ENCODE measurements at regions of chr9 and their contacts with region 1.

Region 1: DNA sequence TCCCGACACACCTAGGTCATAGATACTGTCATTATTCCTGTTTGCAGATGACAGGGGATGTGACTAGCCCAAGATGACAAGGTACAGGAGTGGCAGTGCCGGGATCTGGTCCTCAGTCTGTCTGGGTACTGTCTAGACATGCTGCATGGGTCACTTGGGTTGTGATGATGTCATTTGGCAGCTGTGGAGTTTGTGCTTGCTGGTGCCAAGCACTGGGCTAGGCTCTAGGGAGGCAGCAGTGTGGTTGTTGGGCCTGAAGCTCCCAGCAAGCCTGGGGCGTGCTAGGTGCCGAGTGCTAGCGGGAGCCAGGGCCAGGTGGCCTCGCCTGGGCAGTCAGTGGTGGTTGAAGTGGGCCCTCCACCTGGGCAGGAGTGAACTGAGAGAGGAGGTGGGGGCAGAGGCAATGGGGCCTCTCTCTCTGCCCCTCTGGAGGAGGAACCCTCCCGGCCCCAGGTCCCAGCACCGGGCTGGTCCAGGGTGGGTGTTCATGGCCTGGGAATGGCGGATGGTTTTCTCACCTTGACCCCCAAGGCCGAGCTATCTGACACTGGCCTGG is 8.8 kb upstream of the ASB6 start:
- DNase-seq: no peak
- ATAC-seq: no peak
- H3K4me3 ChIP-seq: no peak overlapping the region
- H3K27ac ChIP-seq: no peak overlapping the region
- H3K4me1 ChIP-seq: peaks cover 0 to 11% (median 0%) of the 10 kb centered on the region in 12 donors
- H3K27me3 ChIP-seq: no peaks in the 10 kb centered on the region
- CTCF ChIP-seq: no peak
- POLR2A ChIP-seq: no peak

Region 2: GRCh38 chr9:129720181-129720864 is 69.6 kb after region 1 on chr9:
- intact Hi-C with region 1: loop called in 4 of 10 experiments (anchors 5 to 10 kb)
- DNase-seq: no peak
- ATAC-seq: no peak
- H3K4me3 ChIP-seq: no peak overlapping the region
- H3K27ac ChIP-seq: no peak overlapping the region
- H3K4me1 ChIP-seq: peaks cover 0 to 6% (median 0%) of the 10 kb centered on the region in 12 donors
- H3K27me3 ChIP-seq: no peaks in the 10 kb centered on the region
- CTCF ChIP-seq: no peak
- POLR2A ChIP-seq: no peak

Region 3: GRCh38 chr9:129731477-129732100 is 80.8 kb after region 1 on chr9:
- intact Hi-C with region 1: loop called in 4 of 10 experiments (anchors 5 to 10 kb)
- DNase-seq: no peak
- ATAC-seq: no peak
- H3K4me3 ChIP-seq: no peak overlapping the region
- H3K27ac ChIP-seq: no peak overlapping the region
- H3K4me1 ChIP-seq: peaks cover 0 to 7% (median under 1%) of the 10 kb centered on the region in 12 donors
- H3K27me3 ChIP-seq: peaks cover 0 to 16% (median 0%) of the 10 kb centered on the region in 9 donors
- CTCF ChIP-seq: no peak
- POLR2A ChIP-seq: no peak

Region 4: DNA sequence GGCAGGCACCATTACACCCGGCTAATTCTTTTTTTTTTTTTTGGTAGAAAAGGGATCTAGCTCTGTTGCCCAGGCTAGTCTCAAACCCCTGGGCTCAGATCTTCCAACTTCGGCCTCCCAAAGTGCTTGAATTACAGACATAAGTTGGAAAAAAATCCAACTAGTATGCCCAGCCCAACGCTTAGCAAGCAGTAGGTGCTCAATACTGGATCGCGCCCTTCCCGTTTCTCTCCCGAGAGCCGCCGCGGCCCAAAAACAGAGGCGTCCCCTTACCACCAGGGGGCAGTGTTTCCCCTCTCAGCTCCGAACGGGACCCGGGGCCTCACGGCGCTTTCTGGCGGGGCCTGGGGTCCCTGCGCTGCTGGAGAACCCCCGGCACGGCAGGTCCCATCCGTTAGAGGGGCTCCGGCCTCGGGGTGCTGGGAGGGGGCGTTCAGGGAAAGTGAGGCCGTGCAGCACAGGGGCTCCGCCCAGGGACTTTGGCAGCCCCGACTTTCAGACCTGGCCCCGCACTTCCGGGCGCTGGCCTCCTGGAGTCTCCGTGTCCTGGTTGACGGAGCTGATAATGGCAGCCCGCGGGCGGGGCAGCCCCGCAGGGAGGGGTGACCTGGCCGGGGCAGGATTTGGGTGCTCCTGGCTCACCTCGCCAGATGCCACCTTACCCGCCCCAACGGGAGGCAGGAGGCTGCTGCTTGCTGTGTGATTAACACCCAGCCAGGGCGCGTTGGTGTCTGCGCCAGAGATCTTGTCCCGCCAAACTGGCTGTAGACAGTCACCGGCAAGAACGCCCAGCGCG is 86.9 kb after region 1 on chr9:
- intact Hi-C with region 1: loop called in 3 of 10 experiments (anchors 5 to 10 kb)
- DNase-seq: peak; percentile 81 to 91 (median 84)
- ATAC-seq: peak; percentile 80 to 94 (median 93)
- H3K4me3 ChIP-seq: peak overlapping the region; percentile 17 to 79 (median 63)
- H3K27ac ChIP-seq: peak overlapping the region in 9 of 12 donors; percentile 3 to 65 (median 48)
- H3K4me1 ChIP-seq: peaks cover 0 to 11% (median 5%) of the 10 kb centered on the region in 12 donors
- H3K27me3 ChIP-seq: peaks cover 0 to 6% (median 0%) of the 10 kb centered on the region in 9 donors
- CTCF ChIP-seq: peak; percentile 94 to 98 (median 97)
- POLR2A ChIP-seq: no peak

Region 5: DNA sequence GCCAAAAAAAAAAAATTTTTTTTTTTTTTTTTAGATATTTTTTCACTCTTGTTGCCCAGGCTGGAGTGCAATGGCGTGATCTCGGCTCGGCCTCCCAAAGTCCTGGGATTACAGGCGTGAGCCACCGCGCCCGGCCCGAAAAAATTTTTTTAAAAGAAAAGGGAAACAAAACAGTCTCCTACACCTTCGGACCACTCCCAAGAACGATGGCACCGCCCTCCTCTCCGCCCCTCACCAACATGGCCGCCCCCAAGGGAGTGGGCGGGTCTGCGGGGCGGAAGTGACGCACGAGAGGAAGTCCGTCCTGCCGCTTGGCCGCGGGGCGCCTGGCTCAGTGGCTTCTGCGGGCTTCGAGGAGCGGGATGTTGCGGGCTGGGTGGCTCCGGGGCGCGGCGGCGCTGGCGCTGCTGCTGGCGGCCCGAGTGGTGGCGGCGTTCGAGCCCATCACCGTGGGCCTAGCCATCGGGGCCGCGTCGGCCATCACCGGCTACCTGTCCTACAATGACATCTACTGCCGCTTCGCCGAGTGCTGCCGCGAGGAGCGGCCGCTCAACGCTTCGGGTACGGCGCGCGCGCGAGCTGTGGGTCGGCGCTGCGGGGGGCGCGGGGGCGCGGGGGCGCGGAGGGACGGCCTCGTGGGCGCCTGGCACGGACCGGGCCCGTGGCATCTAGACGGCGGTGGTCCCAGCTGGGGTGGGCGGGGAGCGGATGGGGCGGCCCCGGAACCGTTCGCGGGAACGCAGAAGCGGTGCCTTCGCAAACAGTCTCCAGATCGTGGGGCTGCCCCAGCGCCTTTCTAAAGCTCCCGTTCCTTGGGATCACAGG is 152.3 kb after region 1 on chr9 and contains the start of gene TOR1B:
- intact Hi-C with region 1: no loop called
- DNase-seq: peak; percentile 94 to 97 (median 95)
- ATAC-seq: peak; percentile 96 to 99 (median 99)
- H3K4me3 ChIP-seq: peak within 1 kb of the TSS; percentile 72 to 98 (median 88)
- H3K27ac ChIP-seq: peak within 1 kb of the TSS; percentile 61 to 93 (median 86)
- H3K4me1 ChIP-seq: peaks cover 0 to 32% (median 8%) of the 10 kb centered on the region in 12 donors
- H3K27me3 ChIP-seq: no peaks in the 10 kb centered on the region
- CTCF ChIP-seq: no peak
- POLR2A ChIP-seq: peak in 1 of 2 donors; percentile 71
- total RNA-seq, gene TOR1B: 9.4 to 16.1 (median 13.0) TPM

Measured in heart left ventricle (tissue), 16 donors.